PC-3 (cell line): ENCODE measurements at regions of chr3 and their contacts with region 1.

Region 1: DNA sequence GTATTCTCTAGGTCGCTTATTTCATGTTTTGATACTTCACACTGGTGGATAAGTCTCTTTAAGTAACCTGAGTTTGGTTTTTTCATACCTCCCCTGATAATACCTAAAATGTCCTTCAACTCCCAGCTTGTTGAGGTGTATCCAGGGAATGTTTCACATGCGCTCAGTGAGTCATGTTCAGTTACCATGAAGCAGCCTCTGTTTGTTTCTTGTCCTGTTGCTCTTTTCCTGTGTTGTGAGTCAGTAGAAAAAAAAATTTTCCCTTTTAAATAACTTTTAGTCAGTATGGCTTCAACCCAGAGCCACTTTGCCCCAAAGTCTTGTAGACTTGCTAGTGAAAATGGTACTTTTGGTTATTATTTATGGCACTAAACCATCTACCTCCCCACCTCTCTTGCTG is 278.4 kb upstream of the ZPLD1 start:
- DNase-seq: peak; percentile 94
- ATAC-seq: peak; percentile 90
- H3K4me3 ChIP-seq: no peak overlapping the region
- H3K27ac ChIP-seq: peak overlapping the region; percentile 96
- H3K4me1 ChIP-seq: peaks cover 34% of the 10 kb centered on the region
- H3K27me3 ChIP-seq: no peaks in the 10 kb centered on the region
- CTCF ChIP-seq: no peak

Region 2: GRCh38 chr3:101861212-101861788 is 295.1 kb before region 1 on chr3:
- CTCF ChIA-PET with region 1: no interaction called
- POLR2A ChIA-PET with region 1: interaction called, 14 read pairs
- intact Hi-C with region 1: no loop called
- DNase-seq: no peak
- ATAC-seq: no peak
- H3K4me3 ChIP-seq: no peak overlapping the region
- H3K27ac ChIP-seq: peak overlapping the region; percentile 10; the same call in 1 of the 2 replicates
- H3K4me1 ChIP-seq: peaks cover 12% of the 10 kb centered on the region
- H3K27me3 ChIP-seq: no peaks in the 10 kb centered on the region
- CTCF ChIP-seq: no peak

Region 3: DNA sequence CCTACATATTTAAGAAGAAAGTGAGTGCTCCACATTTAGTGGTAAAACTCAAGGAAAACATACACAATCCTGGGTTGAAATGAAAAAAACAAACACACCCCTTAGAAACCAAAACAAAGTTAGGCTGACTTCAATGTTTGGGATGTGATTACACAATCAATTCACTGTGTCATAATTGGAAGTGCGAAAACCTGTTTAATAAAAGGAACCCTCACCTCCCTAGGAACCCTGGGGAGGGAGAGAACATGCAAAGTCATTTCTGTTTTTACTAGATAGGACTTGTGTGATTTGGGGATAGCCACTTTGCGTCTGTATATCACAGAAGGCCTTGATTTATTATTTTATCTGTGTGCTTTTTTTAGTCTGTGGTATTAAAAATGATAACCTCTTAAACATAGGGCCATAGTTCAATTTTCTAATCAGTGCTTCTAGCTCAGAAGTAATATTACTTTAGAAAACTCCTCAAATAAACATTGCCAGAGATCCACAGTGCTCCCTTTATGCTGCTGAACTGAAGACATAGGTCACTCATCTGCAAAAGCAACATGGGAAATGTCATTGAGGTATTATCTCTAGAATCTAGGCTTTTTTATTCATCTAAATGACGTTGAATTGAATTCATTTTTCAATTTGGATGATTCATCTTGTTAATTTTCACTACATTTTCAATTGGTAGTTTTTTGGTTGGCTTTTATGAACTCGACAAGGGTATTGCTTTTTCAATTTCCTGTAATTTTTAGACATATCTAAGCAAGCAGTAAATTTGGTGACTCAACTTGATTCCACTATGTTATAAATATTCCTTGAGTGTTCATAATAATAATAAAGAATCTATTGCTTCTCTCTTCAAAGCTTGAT is 31.9 kb before region 1 on chr3:
- CTCF ChIA-PET with region 1: no interaction called
- POLR2A ChIA-PET with region 1: no interaction called
- intact Hi-C with region 1: loop called (anchors 1 kb)
- DNase-seq: peak; percentile 52
- ATAC-seq: peak; percentile 49
- H3K4me3 ChIP-seq: no peak overlapping the region
- H3K27ac ChIP-seq: peak overlapping the region; percentile 88
- H3K4me1 ChIP-seq: peaks cover 35% of the 10 kb centered on the region
- H3K27me3 ChIP-seq: no peaks in the 10 kb centered on the region
- CTCF ChIP-seq: no peak

Region 4: DNA sequence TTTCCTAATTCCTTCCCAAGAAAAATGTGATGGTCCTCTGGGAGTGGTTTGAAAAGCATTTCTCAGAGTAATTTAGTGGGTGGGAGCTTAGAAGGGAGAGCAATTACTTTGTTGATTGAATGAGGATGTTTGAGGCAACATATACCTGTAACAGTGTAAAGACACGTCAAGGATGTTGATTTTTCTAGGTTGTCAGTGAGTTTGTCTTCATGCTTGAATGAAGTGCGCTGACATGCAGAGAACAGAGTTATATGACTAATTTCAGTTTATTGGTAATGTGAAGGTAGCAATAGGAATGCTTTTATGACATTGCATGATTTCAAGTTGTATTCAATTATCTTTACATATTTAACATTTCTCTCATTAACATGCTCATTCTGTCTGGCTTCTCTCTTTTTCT is 20.2 kb before region 1 on chr3:
- CTCF ChIA-PET with region 1: no interaction called
- POLR2A ChIA-PET with region 1: no interaction called
- intact Hi-C with region 1: loop called (anchors 1 kb)
- DNase-seq: peak; percentile 84
- ATAC-seq: peak; percentile 94
- H3K4me3 ChIP-seq: peak overlapping the region; percentile 39; the same call in 1 of the 2 replicates
- H3K27ac ChIP-seq: peak overlapping the region; percentile 94
- H3K4me1 ChIP-seq: peaks cover 18% of the 10 kb centered on the region
- H3K27me3 ChIP-seq: no peaks in the 10 kb centered on the region
- CTCF ChIP-seq: no peak